ENCODE measurements at regions of chr17 and their contacts with region 1.

Region 1: GRCh38 chr17:29111816-29112499 is 68.2 kb downstream of the MYO18A start:
- ATAC-seq: peak; percentile 65 to 77 (median 72)
- H3K4me3 ChIP-seq: no peak overlapping the region
- H3K27ac ChIP-seq: no peak overlapping the region
- H3K4me1 ChIP-seq: peaks cover 50 to 51% of the 10 kb centered on the region in 2 donors

Region 2: DNA sequence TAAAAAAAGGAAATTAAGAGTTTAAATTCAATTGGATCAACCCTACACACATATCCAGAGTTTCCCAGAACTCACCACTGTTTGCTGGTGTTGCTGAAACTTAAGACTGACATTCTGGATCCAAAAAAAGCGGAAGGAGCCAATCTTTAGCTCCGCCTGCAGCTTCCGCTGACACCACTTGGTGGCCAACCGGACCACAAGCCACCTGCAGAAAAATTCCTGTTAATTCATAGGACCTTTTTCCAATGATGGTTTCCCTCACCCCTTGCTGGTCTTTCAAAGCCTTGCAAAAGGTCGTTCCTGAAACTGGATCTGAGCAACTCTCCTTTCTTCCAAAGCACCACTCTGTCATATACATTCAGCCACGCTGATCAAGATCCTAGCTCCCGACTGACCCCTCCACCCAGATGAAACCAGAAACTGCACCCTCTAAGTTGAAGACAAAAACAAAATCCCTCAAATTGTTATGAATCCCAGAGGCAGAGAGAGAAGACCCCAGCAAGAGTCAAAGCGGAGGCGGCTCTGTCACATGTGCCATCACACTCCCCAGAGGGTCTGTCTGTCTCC is 467.9 kb before region 1 on chr17:
- in situ Hi-C with region 1: no loop called
- ATAC-seq: peak in 3 of 8 experiments; percentile 3 to 10 (median 4)
- H3K4me3 ChIP-seq: peak overlapping the region; percentile 85 to 95 (median 92)
- H3K27ac ChIP-seq: peak overlapping the region; percentile 92 to 94
- H3K4me1 ChIP-seq: peaks cover 10% of the 10 kb centered on the region in 2 donors

Region 3: GRCh38 chr17:28726226-28727130 is 385.5 kb before region 1 on chr17 and contains the start of gene TLCD1:
- in situ Hi-C with region 1: loop called in 1 of 9 experiments (anchors 25 kb)
- ATAC-seq: peak; percentile 28 to 77 (median 71)
- H3K4me3 ChIP-seq: peak within 1 kb of the TSS; percentile 63 to 95 (median 82)
- H3K27ac ChIP-seq: peak within 1 kb of the TSS; percentile 89 to 95
- H3K4me1 ChIP-seq: peaks cover 11 to 23% of the 10 kb centered on the region in 2 donors
- total RNA-seq, gene TLCD1: 3.4 to 38.3 (median 7.5) TPM

Region 4: GRCh38 chr17:28967221-28968140 is 144.5 kb before region 1 on chr17:
- in situ Hi-C with region 1: loop called in 5 of 9 experiments (anchors 10 kb)
- ATAC-seq: peak in 5 of 8 experiments; percentile 3 to 38 (median 15)
- H3K4me3 ChIP-seq: no peak overlapping the region
- H3K27ac ChIP-seq: peak overlapping the region; percentile 64 to 81
- H3K4me1 ChIP-seq: peaks cover 22 to 37% of the 10 kb centered on the region in 2 donors

Region 5: DNA sequence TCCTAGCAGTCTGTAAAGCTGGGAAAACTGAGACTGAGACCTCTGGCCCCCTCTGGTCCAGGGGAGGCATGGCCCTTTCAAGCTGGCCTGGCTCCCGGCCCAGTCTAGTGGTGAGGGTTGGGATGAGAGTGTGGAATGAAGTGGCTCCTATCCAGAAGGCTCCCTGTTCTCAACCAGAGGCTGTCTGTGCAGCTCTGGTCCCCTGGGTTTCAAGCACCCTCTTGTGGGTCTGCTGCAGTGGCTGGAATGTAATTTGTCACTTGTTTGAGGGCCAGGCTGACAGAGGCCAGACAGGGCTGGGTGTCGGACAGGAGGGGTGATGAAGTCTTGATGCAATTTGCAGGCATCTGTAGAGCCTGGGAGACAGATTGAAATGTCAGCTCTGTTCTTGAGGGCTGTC is 138.5 kb before region 1 on chr17:
- in situ Hi-C with region 1: loop called in 5 of 9 experiments (anchors 10 kb)
- ATAC-seq: peak in 7 of 8 experiments; percentile 35 to 84 (median 74)
- H3K4me3 ChIP-seq: no peak overlapping the region
- H3K27ac ChIP-seq: peak overlapping the region in 1 of 2 donors; percentile 71
- H3K4me1 ChIP-seq: peaks cover 32 to 46% of the 10 kb centered on the region in 2 donors

Region 6: GRCh38 chr17:29038085-29038795 is 73.7 kb before region 1 on chr17:
- in situ Hi-C with region 1: no loop called
- ATAC-seq: peak in 7 of 8 experiments; percentile 3 to 37 (median 31)
- H3K4me3 ChIP-seq: no peak overlapping the region
- H3K27ac ChIP-seq: peak overlapping the region; percentile 29 to 82
- H3K4me1 ChIP-seq: peaks cover 41 to 50% of the 10 kb centered on the region in 2 donors

Measured in motor neuron (in vitro differentiated cells).